MCF 10A (cell line): ENCODE measurements at regions of chr2 and their contacts with region 1.

Region 1: GRCh38 chr2:180980106-180980942 is at the start of gene UBE2E3:
- DNase-seq: peak; percentile 78
- H3K4me3 Mint-ChIP-seq: peak within 1 kb of the TSS; percentile 93
- H3K27ac Mint-ChIP-seq: peak within 1 kb of the TSS; percentile 98
- H3K4me1 Mint-ChIP-seq: peaks cover 37% of the 10 kb centered on the region
- H3K27me3 Mint-ChIP-seq: no peaks in the 10 kb centered on the region
- CTCF ChIP-seq: peak; percentile 71
- total RNA-seq, gene UBE2E3: 69.0 and 69.3 TPM in 2 replicates

Region 2: GRCh38 chr2:180385601-180386201 is 594.6 kb before region 1 on chr2:
- CTCF ChIA-PET with region 1: no interaction called
- POLR2A ChIA-PET with region 1: interaction called, 3 read pairs
- intact Hi-C with region 1: loop called (anchors 5 kb)
- DNase-seq: peak; percentile 78
- H3K4me3 Mint-ChIP-seq: no peak overlapping the region
- H3K27ac Mint-ChIP-seq: peak overlapping the region; percentile 78
- H3K4me1 Mint-ChIP-seq: peaks cover 16% of the 10 kb centered on the region
- H3K27me3 Mint-ChIP-seq: no peaks in the 10 kb centered on the region
- CTCF ChIP-seq: no peak

Region 3: GRCh38 chr2:180604077-180604476 is 376.2 kb before region 1 on chr2:
- CTCF ChIA-PET with region 1: no interaction called
- POLR2A ChIA-PET with region 1: no interaction called
- intact Hi-C with region 1: loop called (anchors 10 kb)
- DNase-seq: peak; percentile 48
- H3K4me3 Mint-ChIP-seq: no peak overlapping the region
- H3K27ac Mint-ChIP-seq: no peak overlapping the region
- H3K4me1 Mint-ChIP-seq: no peaks in the 10 kb centered on the region
- H3K27me3 Mint-ChIP-seq: no peaks in the 10 kb centered on the region
- CTCF ChIP-seq: peak; percentile 21

Region 4: GRCh38 chr2:180707884-180708205 is 272.5 kb before region 1 on chr2:
- CTCF ChIA-PET with region 1: interaction called, 3 read pairs
- POLR2A ChIA-PET with region 1: interaction called, 13 read pairs
- intact Hi-C with region 1: loop called (anchors 5 kb)
- DNase-seq: peak; percentile 98
- H3K4me3 Mint-ChIP-seq: no peak overlapping the region
- H3K27ac Mint-ChIP-seq: peak overlapping the region; percentile 7
- H3K4me1 Mint-ChIP-seq: peaks cover 24% of the 10 kb centered on the region
- H3K27me3 Mint-ChIP-seq: no peaks in the 10 kb centered on the region
- CTCF ChIP-seq: no peak

Region 5: DNA sequence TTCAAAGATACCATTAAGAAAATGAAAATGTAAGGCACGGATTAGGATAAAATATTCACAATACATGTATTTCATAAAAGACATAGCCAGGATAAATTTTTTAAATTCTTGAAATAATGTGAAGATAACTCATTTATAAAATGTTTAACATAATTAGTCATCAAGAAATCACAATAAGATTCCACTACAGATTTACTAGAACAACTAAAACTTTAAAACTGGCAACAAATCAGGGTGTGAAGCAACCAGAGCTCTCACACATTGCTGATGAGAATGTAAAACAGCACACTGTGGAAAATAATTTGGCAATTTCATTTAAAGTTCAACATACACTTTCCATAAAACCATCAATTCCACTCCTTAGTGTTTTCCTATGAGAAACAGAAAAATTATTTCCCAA is 89.5 kb before region 1 on chr2:
- CTCF ChIA-PET with region 1: no interaction called
- POLR2A ChIA-PET with region 1: no interaction called
- intact Hi-C with region 1: no loop called
- DNase-seq: peak; percentile 18
- H3K4me3 Mint-ChIP-seq: no peak overlapping the region
- H3K27ac Mint-ChIP-seq: no peak overlapping the region
- H3K4me1 Mint-ChIP-seq: no peaks in the 10 kb centered on the region
- H3K27me3 Mint-ChIP-seq: no peaks in the 10 kb centered on the region
- CTCF ChIP-seq: no peak

Region 6: DNA sequence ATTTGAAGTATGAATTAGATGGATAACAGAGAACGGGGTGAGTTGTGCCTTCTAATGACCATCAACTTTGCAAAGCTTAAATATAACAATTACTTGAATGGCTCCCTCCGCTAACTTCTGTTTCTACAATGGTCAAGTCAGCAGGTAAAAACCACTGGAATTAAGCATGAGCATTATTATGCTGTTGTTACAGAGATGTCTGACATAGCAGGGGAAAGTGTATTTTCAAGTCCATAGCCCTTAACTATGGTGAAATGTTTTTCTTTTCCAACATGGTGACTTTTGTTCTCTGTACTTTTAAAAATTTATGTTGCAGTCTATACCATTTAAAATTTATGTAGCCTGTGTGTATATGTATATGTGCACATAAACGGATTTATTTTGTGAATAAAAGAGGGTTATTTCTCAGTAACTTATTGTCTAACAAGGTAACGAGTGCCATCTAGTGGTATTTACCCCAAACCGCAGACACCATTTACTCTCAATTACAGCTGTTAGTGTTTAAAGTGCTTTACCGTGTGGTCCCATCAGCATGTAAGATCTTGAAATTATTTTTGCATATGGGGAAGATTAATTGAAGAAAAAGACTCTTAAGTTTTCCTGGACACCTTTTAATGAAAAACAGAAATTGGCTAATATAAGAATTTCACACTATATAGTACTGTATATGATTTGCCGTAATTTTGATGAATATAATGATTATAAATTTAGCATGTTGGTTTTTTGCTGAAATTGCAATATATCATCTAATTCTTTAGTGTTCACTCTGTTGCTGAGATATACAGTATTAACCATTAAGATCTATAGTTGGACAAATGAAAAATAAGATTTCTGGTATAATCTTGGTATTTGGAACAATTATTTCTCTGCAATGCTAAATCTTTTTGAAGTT is 78.3 kb after region 1 on chr2:
- CTCF ChIA-PET with region 1: interaction called, 10 read pairs
- POLR2A ChIA-PET with region 1: interaction called, 4 read pairs
- intact Hi-C with region 1: loop called (anchors 5 kb)
- DNase-seq: peak; percentile 53
- H3K4me3 Mint-ChIP-seq: no peak overlapping the region
- H3K27ac Mint-ChIP-seq: no peak overlapping the region
- H3K4me1 Mint-ChIP-seq: peaks cover 16% of the 10 kb centered on the region
- H3K27me3 Mint-ChIP-seq: no peaks in the 10 kb centered on the region
- CTCF ChIP-seq: peak; percentile 80